ENCODE measurements at regions of chr10 and their contacts with region 1.

Region 1: GRCh38 chr10:88687853-88688467 is 18.1 kb upstream of the LIPK start:
- DNase-seq: no peak
- H3K4me3 ChIP-seq: no peak overlapping the region
- H3K27ac ChIP-seq: no peak overlapping the region
- H3K4me1 ChIP-seq: no peaks in the 10 kb centered on the region
- H3K27me3 ChIP-seq: no peaks in the 10 kb centered on the region
- CTCF ChIP-seq: peak; percentile 86

Region 2: GRCh38 chr10:88672041-88672440 is 15.9 kb before region 1 on chr10:
- CTCF ChIA-PET with region 1: no interaction called
- POLR2A ChIA-PET with region 1: no interaction called
- intact Hi-C with region 1: no loop called
- DNase-seq: no peak
- H3K4me3 ChIP-seq: no peak overlapping the region
- H3K27ac ChIP-seq: no peak overlapping the region
- H3K4me1 ChIP-seq: no peaks in the 10 kb centered on the region
- H3K27me3 ChIP-seq: no peaks in the 10 kb centered on the region
- CTCF ChIP-seq: no peak

Region 3: DNA sequence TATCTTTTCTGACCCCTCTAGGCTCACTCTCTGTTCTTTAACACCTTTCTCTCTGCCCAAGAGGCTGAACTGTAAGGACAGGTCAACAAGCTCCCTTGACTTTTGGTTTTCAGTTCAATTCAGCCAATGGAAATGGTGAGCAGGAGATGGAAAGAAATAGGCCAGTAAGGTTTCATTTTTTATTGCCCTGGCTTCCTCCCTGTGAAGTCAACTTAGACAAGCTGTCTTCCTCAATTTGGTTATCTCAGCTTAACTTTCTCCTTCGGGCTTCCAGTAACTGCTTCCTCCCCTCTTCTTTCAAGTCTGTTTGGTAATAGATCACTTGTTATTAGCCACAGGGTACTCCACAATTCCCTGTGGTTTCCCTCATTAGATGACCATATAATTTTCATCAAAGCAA is 37.8 kb after region 1 on chr10:
- CTCF ChIA-PET with region 1: no interaction called
- POLR2A ChIA-PET with region 1: no interaction called
- intact Hi-C with region 1: no loop called
- DNase-seq: no peak
- H3K4me3 ChIP-seq: no peak overlapping the region
- H3K27ac ChIP-seq: no peak overlapping the region
- H3K4me1 ChIP-seq: no peaks in the 10 kb centered on the region
- H3K27me3 ChIP-seq: no peaks in the 10 kb centered on the region
- CTCF ChIP-seq: no peak

Region 4: GRCh38 chr10:88810196-88810961 is 122.4 kb after region 1 on chr10:
- CTCF ChIA-PET with region 1: interaction called, 4 read pairs
- POLR2A ChIA-PET with region 1: no interaction called
- intact Hi-C with region 1: loop called (anchors 1 kb)
- DNase-seq: peak; percentile 22 to 60
- H3K4me3 ChIP-seq: no peak overlapping the region
- H3K27ac ChIP-seq: no peak overlapping the region
- H3K4me1 ChIP-seq: no peaks in the 10 kb centered on the region; the same call in 1 of the 2 replicates
- H3K27me3 ChIP-seq: no peaks in the 10 kb centered on the region
- CTCF ChIP-seq: peak; percentile 70